Activated CD4-positive, alpha-beta memory T cell treated with anti-CD3 and anti-CD28 coated beads for 36 hours (primary cell): ENCODE measurements at regions of chrX and their contacts with region 1.

Region 1: DNA sequence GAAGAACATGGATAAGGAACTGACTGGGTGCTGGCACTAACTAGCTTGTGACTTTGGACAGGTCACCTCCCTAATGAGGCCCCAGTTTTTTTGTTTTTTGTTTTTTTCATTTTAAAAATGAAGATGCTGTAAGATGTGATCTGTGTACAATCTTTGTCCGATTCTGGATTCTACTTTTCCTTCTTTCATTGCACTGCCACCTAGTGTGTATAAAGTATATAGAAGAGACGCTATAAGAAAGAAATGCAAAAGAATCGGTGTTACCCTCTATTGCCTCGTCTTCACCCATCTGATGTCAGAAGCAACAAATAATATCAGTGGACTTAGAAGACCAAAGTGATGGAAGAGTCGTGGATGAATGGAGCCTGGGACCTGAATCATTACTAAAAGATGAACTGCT is 58.6 kb upstream of the P2RY10 start:
- DNase-seq: no peak
- H3K4me3 Mint-ChIP-seq: no peak overlapping the region
- H3K27ac Mint-ChIP-seq: no peak overlapping the region
- H3K4me1 Mint-ChIP-seq: peaks cover 5% of the 10 kb centered on the region
- H3K27me3 Mint-ChIP-seq: no peaks in the 10 kb centered on the region

Region 2: GRCh38 chrX:78603908-78604307 is 282.6 kb before region 1 on chrX:
- CTCF ChIA-PET with region 1: no interaction called
- POLR2A ChIA-PET with region 1: no interaction called
- intact Hi-C with region 1: loop called (anchors 10 kb)
- DNase-seq: no peak
- H3K4me3 Mint-ChIP-seq: no peak overlapping the region
- H3K27ac Mint-ChIP-seq: no peak overlapping the region
- H3K4me1 Mint-ChIP-seq: no peaks in the 10 kb centered on the region
- H3K27me3 Mint-ChIP-seq: no peaks in the 10 kb centered on the region

Region 3: GRCh38 chrX:78673256-78673655 is 213.3 kb before region 1 on chrX:
- CTCF ChIA-PET with region 1: no interaction called
- POLR2A ChIA-PET with region 1: no interaction called
- intact Hi-C with region 1: no loop called
- DNase-seq: no peak
- H3K4me3 Mint-ChIP-seq: no peak overlapping the region
- H3K27ac Mint-ChIP-seq: no peak overlapping the region
- H3K4me1 Mint-ChIP-seq: no peaks in the 10 kb centered on the region
- H3K27me3 Mint-ChIP-seq: no peaks in the 10 kb centered on the region